ENCODE measurements at regions of chr10 and their contacts with region 1.

Region 1: DNA sequence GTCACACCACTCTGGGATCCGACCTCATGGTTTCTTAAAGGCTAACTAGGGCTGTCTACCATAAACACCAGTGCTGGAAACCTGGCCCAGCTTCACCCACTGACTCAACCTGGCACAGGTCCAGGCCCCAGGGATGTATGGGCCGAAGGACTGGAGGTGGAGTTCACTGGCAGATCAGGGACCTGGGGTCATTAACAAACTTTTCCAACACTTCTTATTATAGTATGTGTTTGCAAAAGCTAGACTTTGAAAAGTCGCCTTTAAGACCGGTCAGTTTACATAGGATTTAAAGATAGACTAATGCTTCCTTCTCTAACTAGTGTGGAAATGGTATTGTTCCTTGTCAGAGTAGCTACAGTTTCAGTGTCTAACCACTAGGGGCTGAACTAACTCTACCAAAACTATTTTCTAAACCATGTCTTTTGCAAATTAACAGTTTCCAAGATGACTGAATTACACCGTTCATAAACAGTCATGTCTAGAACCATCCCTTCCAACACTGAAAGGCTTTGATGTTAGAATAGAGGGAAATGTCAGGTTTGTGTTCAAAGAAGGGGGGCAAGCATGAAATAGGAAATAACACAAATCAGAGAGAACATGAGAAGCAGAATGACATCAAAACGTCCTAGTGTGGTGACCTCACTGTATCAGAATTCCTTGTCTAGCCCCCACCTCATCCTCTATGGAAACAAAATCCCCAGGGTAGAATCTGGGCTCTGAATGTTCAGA is 29.7 kb downstream of the STN1 start:
- DNase-seq: peak; percentile 50
- H3K4me3 ChIP-seq: no peak overlapping the region
- H3K27ac ChIP-seq: peak overlapping the region; percentile 90
- H3K4me1 ChIP-seq: peaks cover 64% of the 10 kb centered on the region
- H3K27me3 ChIP-seq: no peaks in the 10 kb centered on the region
- CTCF ChIP-seq: peak; percentile 81

Region 2: GRCh38 chr10:103966671-103967447 is 78.6 kb after region 1 on chr10 and contains the start of gene SLK:
- intact Hi-C with region 1: loop called (anchors 10 kb)
- DNase-seq: peak; percentile 85
- H3K4me3 ChIP-seq: peak within 1 kb of the TSS; percentile 88
- H3K27ac ChIP-seq: peak within 1 kb of the TSS; percentile 98
- H3K4me1 ChIP-seq: peaks cover 57% of the 10 kb centered on the region
- H3K27me3 ChIP-seq: no peaks in the 10 kb centered on the region
- CTCF ChIP-seq: no peak
- total RNA-seq, gene SLK: 36.1 TPM

Region 3: GRCh38 chr10:104121520-104122224 is 233.4 kb after region 1 on chr10 and contains the start of gene SFR1:
- intact Hi-C with region 1: loop called (anchors 10 kb)
- DNase-seq: peak; percentile 99
- H3K4me3 ChIP-seq: peak within 1 kb of the TSS; percentile 77
- H3K27ac ChIP-seq: peak within 1 kb of the TSS; percentile 98
- H3K4me1 ChIP-seq: peaks cover 27% of the 10 kb centered on the region
- H3K27me3 ChIP-seq: no peaks in the 10 kb centered on the region
- CTCF ChIP-seq: peak; percentile 71
- total RNA-seq, gene SFR1: 6.0 TPM

Region 4: GRCh38 chr10:104209575-104210198 is 321.4 kb after region 1 on chr10:
- intact Hi-C with region 1: loop called (anchors 2 kb)
- DNase-seq: no peak
- H3K4me3 ChIP-seq: no peak overlapping the region
- H3K27ac ChIP-seq: no peak overlapping the region
- H3K4me1 ChIP-seq: no peaks in the 10 kb centered on the region
- H3K27me3 ChIP-seq: no peaks in the 10 kb centered on the region
- CTCF ChIP-seq: peak; percentile 69

Measured in left ventricle myocardium inferior (tissue), 1 donor.